Naive thymus-derived CD4-positive, alpha-beta T cell (primary cell): ENCODE measurements at regions of chr6 and their contacts with region 1.

Region 1: GRCh38 chr6:137341681-137342195 is 122.6 kb upstream of the IFNGR1 start:
- DNase-seq: peak in 8 of 9 donors; percentile 16 to 62 (median 48)
- ATAC-seq: peak; percentile 80
- H3K4me3 ChIP-seq: peak overlapping the region; percentile 24
- H3K4me3 Mint-ChIP-seq: peak overlapping the region in 9 of 10 donors; percentile 52 to 87 (median 77)
- H3K27ac ChIP-seq: no peak overlapping the region
- H3K27ac Mint-ChIP-seq: peak overlapping the region in 1 of 9 donors; percentile 76
- H3K4me1 ChIP-seq: peaks cover 5 to 10% of the 10 kb centered on the region in 2 donors
- H3K4me1 Mint-ChIP-seq: peaks cover 6 to 19% (median 17%) of the 10 kb centered on the region in 7 donors
- H3K27me3 ChIP-seq: no peaks in the 10 kb centered on the region
- H3K27me3 Mint-ChIP-seq: peaks cover 0 to 55% (median 0%) of the 10 kb centered on the region in 5 donors

Region 2: DNA sequence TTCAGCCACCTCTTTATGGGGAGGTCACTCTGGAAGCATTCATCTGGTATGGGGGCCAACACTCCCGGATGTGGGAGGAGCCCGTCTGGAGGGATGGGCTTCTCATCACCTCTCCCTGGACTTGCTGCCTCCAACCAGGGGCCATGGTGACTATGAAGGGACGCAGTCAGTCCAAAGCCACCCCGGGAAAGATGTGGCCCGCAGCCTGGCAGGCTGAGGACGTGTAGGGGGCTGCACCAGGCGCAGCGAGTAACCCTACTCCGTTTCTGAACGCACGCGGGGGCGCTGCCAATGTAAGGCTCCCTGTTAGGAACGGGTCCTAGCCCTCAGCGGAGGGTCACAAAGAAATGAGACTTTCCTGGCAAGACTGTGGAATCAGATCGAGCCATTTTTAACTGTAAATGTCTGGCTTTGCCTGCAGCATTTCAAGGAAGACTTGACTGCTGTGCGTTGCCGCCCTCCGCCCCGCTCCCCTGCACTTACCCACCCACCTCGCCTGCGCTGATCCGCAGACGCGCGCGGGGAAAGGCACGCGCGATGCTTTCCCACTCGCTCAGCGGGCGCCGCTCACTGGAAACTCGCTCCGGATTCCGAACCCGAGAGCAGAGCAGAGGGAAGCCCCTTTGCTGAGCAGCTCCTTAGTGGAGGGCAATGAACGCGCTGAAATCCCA is 352.0 kb before region 1 on chr6:
- CTCF ChIA-PET with region 1: no interaction called
- POLR2A ChIA-PET with region 1: no interaction called
- intact Hi-C with region 1: no loop called
- DNase-seq: no peak
- ATAC-seq: no peak
- H3K4me3 ChIP-seq: no peak overlapping the region
- H3K4me3 Mint-ChIP-seq: peak overlapping the region in 2 of 10 donors; percentile 30 to 40
- H3K27ac ChIP-seq: no peak overlapping the region
- H3K27ac Mint-ChIP-seq: no peak overlapping the region
- H3K4me1 ChIP-seq: peaks cover 0 to 5% of the 10 kb centered on the region in 2 donors
- H3K4me1 Mint-ChIP-seq: peaks cover 0 to 15% (median 2%) of the 10 kb centered on the region in 7 donors
- H3K27me3 ChIP-seq: peaks cover 2 to 6% of the 10 kb centered on the region in 2 donors
- H3K27me3 Mint-ChIP-seq: peaks cover 55 to 78% (median 66%) of the 10 kb centered on the region in 5 donors

Region 3: DNA sequence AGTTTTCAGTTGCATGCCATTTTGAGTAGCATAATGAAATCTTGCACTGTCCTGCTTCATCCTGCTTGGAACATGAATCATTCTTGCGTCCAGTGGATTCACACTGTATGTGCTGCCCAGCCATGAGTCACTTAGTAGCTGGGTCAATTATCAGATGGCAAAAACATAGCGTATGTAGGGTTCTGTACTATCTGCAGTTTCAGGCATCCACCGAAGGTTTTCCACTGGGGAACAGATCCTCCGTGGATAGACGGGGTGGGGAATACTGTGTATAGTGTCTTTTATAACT is 229.7 kb before region 1 on chr6:
- CTCF ChIA-PET with region 1: no interaction called
- POLR2A ChIA-PET with region 1: no interaction called
- intact Hi-C with region 1: no loop called
- DNase-seq: no peak
- ATAC-seq: no peak
- H3K4me3 ChIP-seq: no peak overlapping the region
- H3K4me3 Mint-ChIP-seq: no peak overlapping the region
- H3K27ac ChIP-seq: no peak overlapping the region
- H3K27ac Mint-ChIP-seq: no peak overlapping the region
- H3K4me1 ChIP-seq: no peaks in the 10 kb centered on the region
- H3K4me1 Mint-ChIP-seq: peaks cover 0 to 2% (median 0%) of the 10 kb centered on the region in 7 donors
- H3K27me3 ChIP-seq: no peaks in the 10 kb centered on the region
- H3K27me3 Mint-ChIP-seq: peaks cover 0 to 21% (median 13%) of the 10 kb centered on the region in 5 donors

Region 4: DNA sequence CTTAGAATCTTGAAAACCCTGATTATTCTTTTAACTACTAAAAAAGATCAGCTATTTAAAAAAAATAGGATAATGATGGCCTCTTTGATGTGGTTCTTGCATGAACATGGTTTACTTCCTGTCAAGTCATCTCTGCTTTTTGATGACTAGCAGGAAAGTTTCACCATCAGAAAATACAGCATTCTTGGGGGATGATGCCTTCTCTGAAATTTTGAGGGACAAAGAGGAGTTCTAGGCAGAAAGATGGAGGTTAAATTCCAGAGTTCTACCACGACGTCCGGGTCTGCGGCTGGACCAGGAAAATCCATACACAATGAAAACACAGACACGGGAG is 22.0 kb after region 1 on chr6:
- CTCF ChIA-PET with region 1: interaction called, 6 read pairs
- POLR2A ChIA-PET with region 1: no interaction called
- intact Hi-C with region 1: loop called in 1 of 2 experiments (anchors 2 kb)
- DNase-seq: peak in 7 of 9 donors; percentile 43 to 70 (median 57)
- ATAC-seq: peak; percentile 73
- H3K4me3 ChIP-seq: no peak overlapping the region
- H3K4me3 Mint-ChIP-seq: peak overlapping the region in 8 of 10 donors; percentile 0 to 75 (median 46)
- H3K27ac ChIP-seq: no peak overlapping the region
- H3K27ac Mint-ChIP-seq: peak overlapping the region in 6 of 9 donors; percentile 3 to 80 (median 64)
- H3K4me1 ChIP-seq: peaks cover 20 to 24% of the 10 kb centered on the region in 2 donors
- H3K4me1 Mint-ChIP-seq: peaks cover 18 to 26% (median 22%) of the 10 kb centered on the region in 7 donors
- H3K27me3 ChIP-seq: no peaks in the 10 kb centered on the region
- H3K27me3 Mint-ChIP-seq: peaks cover 0 to 17% (median 0%) of the 10 kb centered on the region in 5 donors

Region 5: DNA sequence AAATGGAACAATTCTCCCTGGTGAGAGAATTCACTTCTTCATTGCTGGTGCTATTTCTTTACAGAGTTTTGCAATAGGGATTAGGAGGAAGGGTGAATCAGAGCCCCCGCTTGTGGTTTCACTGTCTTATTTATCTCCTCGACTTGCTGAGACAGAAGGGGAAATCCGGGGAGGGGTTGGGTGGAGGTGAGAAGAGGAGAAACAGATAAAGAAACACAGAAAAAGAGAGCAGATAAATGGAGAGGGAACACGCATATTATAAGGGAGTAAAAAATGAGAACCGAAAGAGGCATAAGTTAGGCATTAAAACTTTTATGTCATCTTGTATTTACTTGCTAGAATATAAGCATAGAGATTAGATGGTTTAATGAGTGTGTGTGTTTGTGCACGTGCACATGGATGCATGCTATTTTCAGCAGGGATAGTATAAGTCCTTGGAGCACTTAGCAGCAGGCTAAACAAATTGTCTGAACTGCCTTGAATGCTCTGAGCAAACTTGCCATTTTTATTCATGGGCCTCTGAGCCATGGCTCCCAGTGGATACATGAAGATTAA is 47.5 kb after region 1 on chr6:
- CTCF ChIA-PET with region 1: interaction called, 4 read pairs
- POLR2A ChIA-PET with region 1: interaction called, 3 read pairs
- intact Hi-C with region 1: loop called in 1 of 2 experiments (anchors 1 kb)
- DNase-seq: peak in 8 of 9 donors; percentile 50 to 69 (median 64)
- ATAC-seq: peak; percentile 98
- H3K4me3 ChIP-seq: peak overlapping the region; percentile 18
- H3K4me3 Mint-ChIP-seq: peak overlapping the region; percentile 51 to 86 (median 80)
- H3K27ac ChIP-seq: peak overlapping the region; percentile 34
- H3K27ac Mint-ChIP-seq: peak overlapping the region; percentile 67 to 93 (median 83)
- H3K4me1 ChIP-seq: peaks cover 28 to 58% of the 10 kb centered on the region in 2 donors
- H3K4me1 Mint-ChIP-seq: peaks cover 43 to 78% (median 63%) of the 10 kb centered on the region in 7 donors
- H3K27me3 ChIP-seq: no peaks in the 10 kb centered on the region
- H3K27me3 Mint-ChIP-seq: no peaks in the 10 kb centered on the region

Region 6: DNA sequence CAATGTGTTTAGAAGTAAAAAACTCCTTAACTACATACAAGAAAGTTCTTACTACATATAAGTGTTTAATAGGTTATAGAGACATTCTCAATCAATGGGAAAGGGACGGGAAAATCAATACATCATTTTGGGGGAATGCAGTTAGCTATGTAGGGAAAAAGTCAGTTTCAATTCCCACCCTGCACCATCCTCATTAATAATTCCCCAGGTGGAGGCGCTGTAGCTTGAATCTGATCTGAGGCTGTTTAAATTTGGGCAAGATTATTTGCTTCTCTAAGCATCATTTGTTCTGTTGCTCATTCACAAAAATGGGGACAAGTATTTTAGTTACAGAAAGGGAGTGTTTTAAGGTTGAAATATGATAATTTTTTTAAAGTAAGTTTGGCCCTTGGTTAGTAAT is 133.4 kb after region 1 on chr6:
- CTCF ChIA-PET with region 1: no interaction called
- POLR2A ChIA-PET with region 1: no interaction called
- intact Hi-C with region 1: loop called in 1 of 2 experiments (anchors 5 kb)
- DNase-seq: no peak
- ATAC-seq: no peak
- H3K4me3 ChIP-seq: no peak overlapping the region
- H3K4me3 Mint-ChIP-seq: no peak overlapping the region
- H3K27ac ChIP-seq: no peak overlapping the region
- H3K27ac Mint-ChIP-seq: no peak overlapping the region
- H3K4me1 ChIP-seq: no peaks in the 10 kb centered on the region
- H3K4me1 Mint-ChIP-seq: no peaks in the 10 kb centered on the region
- H3K27me3 ChIP-seq: peaks cover 0 to 4% of the 10 kb centered on the region in 2 donors
- H3K27me3 Mint-ChIP-seq: peaks cover 15 to 62% (median 27%) of the 10 kb centered on the region in 5 donors

Region 7: GRCh38 chr6:137495703-137496336 is 154.1 kb after region 1 on chr6:
- CTCF ChIA-PET with region 1: no interaction called
- POLR2A ChIA-PET with region 1: no interaction called
- intact Hi-C with region 1: no loop called
- DNase-seq: no peak
- ATAC-seq: no peak
- H3K4me3 ChIP-seq: no peak overlapping the region
- H3K4me3 Mint-ChIP-seq: peak overlapping the region; percentile 37 to 81 (median 58)
- H3K27ac ChIP-seq: no peak overlapping the region
- H3K27ac Mint-ChIP-seq: peak overlapping the region in 2 of 9 donors; percentile 48 to 74
- H3K4me1 ChIP-seq: peaks cover 35 to 40% of the 10 kb centered on the region in 2 donors
- H3K4me1 Mint-ChIP-seq: peaks cover 27 to 65% (median 51%) of the 10 kb centered on the region in 7 donors
- H3K27me3 ChIP-seq: peaks cover 50 to 73% of the 10 kb centered on the region in 2 donors
- H3K27me3 Mint-ChIP-seq: peaks cover 65 to 92% (median 81%) of the 10 kb centered on the region in 5 donors